K562 (cell line): ENCODE measurements at regions of chrX and their contacts with region 1.

Region 1: GRCh38 chrX:125492439-125492838 is 172.8 kb downstream of the TEX13C start:
- DNase-seq: peak; percentile 12 to 76 (median 40)
- ATAC-seq: peak; percentile 98
- H3K4me3 ChIP-seq: no peak overlapping the region
- H3K27ac ChIP-seq: peak overlapping the region; percentile 82
- H3K4me1 ChIP-seq: peaks cover 0 to 2% of the 10 kb centered on the region in 2 experiments; a peak in 2 of 5 replicates
- H3K27me3 ChIP-seq: no peaks in the 10 kb centered on the region
- CTCF ChIP-seq: no peak
- EP300 ChIP-seq: peak; percentile 87
- POLR2A ChIP-seq: no peak
- RAD21 ChIP-seq: 0 out of 4 replicates have a peak, but pooled peaks of 1 of the 2 experiments have one; percentile 13

Region 2: DNA sequence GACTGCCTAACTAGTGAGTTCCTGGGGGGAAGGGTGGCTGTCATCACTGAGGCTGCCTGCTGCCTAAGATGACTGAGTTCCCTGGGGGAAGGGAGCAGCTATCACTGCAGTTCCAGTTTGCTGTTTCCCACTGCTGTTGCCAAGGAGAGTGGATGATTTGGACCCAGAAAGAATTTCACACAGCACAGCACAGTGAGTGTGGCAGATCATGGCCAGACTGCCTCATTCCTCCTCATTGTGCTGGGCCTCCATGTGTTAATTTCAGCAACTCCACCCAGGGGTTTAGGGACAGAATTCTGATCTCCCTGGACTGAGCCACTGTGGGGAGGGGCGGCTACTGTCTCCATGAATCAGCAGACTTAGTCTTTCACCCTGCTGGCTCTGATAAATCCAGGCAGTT is 47.8 kb before region 1 on chrX:
- CTCF ChIA-PET with region 1: no interaction called
- POLR2A ChIA-PET with region 1: no interaction called
- in situ Hi-C with region 1: no loop called
- intact Hi-C with region 1: loop called (anchors 5 kb)
- DNase-seq: peak in 2 of 4 experiments; percentile 33 to 66
- ATAC-seq: peak; percentile 93
- H3K4me3 ChIP-seq: no peak overlapping the region
- H3K27ac ChIP-seq: peak overlapping the region; percentile 69; the same call in 2 of the 3 replicates
- H3K4me1 ChIP-seq: peaks cover 0 to 13% of the 10 kb centered on the region in 2 experiments; a peak in 3 of 5 replicates
- H3K27me3 ChIP-seq: no peaks in the 10 kb centered on the region
- CTCF ChIP-seq: no peak
- EP300 ChIP-seq: no peak
- POLR2A ChIP-seq: no peak
- RAD21 ChIP-seq: no peak